ENCODE measurements at regions of chr6 and their contacts with region 1.

Region 1: DNA sequence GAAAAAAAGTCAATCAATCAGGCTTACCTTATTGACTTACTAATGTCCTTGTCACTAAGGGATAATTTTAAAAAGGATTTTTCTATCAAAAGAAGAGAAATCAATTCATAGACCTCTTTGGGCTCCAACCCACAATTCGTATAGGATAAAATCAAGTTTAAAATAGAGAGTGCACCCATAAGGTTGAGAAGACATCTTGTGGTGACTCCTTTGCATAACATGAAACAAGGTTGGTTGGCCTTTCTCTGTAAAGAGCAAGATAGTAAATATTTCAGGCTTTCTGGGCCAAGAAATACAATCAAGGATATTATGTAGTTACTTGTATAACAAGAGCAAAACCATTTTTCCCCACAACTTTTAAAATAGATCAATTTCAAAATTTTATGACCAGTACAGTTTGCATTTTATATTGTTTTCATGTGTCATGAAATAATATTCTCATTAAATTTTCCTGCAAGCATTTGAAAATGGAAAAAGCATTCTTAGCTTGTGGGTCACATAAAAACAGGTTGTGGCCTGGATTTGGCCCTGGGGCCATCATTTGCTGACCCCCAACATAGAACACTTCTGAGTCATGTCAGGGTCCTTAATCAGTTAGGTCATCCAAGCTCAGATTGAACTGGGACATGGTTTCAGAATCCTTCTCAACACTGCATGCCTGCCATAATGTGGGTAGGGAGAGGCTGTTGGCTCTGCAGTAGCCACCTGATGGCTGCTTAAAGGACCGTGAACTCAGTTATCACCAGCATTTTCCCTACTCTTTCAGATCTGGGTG is 76.7 kb downstream of the MYB start:
- DNase-seq: peak in 1 of 2 experiments; percentile 44
- H3K4me3 ChIP-seq: no peak overlapping the region
- H3K27ac ChIP-seq: no peak overlapping the region
- H3K4me1 ChIP-seq: peaks cover 19% of the 10 kb centered on the region
- H3K27me3 ChIP-seq: peaks cover 85% of the 10 kb centered on the region
- CTCF ChIP-seq: peak; percentile 47; the same call in 1 of the 2 replicates

Region 2: DNA sequence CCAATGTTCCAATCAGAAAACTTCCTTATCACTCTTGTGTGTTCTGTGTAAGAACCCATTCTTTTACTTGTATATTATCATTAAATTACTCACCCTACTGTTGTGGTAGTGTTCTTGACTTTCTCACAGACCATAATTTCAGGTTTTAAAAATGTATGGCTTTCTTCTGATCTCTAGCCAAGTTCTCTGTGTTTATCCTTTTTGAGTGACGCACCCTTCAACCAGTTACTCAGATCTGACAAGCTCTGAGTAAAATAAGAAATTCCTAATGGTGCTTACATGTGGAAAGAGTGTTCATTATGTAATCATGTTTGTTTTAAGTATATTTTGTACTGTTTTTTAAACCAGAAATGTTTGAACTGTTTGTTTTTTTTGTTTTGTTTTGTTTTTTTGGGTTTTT is 1293.8 kb before region 1 on chr6:
- CTCF ChIA-PET with region 1: no interaction called
- POLR2A ChIA-PET with region 1: no interaction called
- intact Hi-C with region 1: no loop called
- DNase-seq: no peak
- H3K4me3 ChIP-seq: no peak overlapping the region
- H3K27ac ChIP-seq: no peak overlapping the region
- H3K4me1 ChIP-seq: no peaks in the 10 kb centered on the region
- H3K27me3 ChIP-seq: no peaks in the 10 kb centered on the region
- CTCF ChIP-seq: no peak

Region 3: DNA sequence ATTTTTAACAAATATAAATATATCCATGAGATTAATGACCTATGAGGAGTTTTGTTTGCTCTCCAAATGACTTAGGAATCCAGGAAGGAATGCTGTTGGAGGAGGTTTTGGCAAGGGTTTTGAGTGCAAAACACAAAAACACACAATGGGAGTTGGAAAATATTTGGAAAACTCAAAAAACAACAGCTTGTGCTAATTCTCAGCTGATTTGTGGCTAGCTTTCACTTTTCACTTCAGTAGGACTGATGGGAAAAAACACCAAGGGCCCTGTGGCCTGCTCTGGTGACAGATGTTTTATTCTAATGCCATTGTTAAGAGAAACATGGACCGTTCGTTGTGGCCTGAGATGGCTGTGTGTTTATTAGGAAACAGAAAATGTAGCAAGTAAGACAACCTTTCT is 421.8 kb before region 1 on chr6:
- CTCF ChIA-PET with region 1: no interaction called
- POLR2A ChIA-PET with region 1: no interaction called
- intact Hi-C with region 1: no loop called
- DNase-seq: peak in 1 of 2 experiments; percentile 30
- H3K4me3 ChIP-seq: no peak overlapping the region
- H3K27ac ChIP-seq: no peak overlapping the region
- H3K4me1 ChIP-seq: no peaks in the 10 kb centered on the region
- H3K27me3 ChIP-seq: no peaks in the 10 kb centered on the region
- CTCF ChIP-seq: no peak

Region 4: GRCh38 chr6:135054569-135055498 is 203.0 kb before region 1 on chr6 and contains the start of gene HBS1L:
- CTCF ChIA-PET with region 1: no interaction called
- POLR2A ChIA-PET with region 1: interaction called, 11 read pairs
- intact Hi-C with region 1: no loop called
- DNase-seq: peak; percentile 96 to 98
- H3K4me3 ChIP-seq: peak within 1 kb of the TSS; percentile 84
- H3K27ac ChIP-seq: peak within 1 kb of the TSS; percentile 72
- H3K4me1 ChIP-seq: peaks cover 22% of the 10 kb centered on the region
- H3K27me3 ChIP-seq: no peaks in the 10 kb centered on the region
- CTCF ChIP-seq: no peak; the same call in 1 of the 2 replicates
- total RNA-seq, gene HBS1L: 70.5 and 84.4 TPM in 2 replicates

Region 5: GRCh38 chr6:135497412-135498269 is 239.8 kb after region 1 on chr6 and contains the start of gene AHI1:
- CTCF ChIA-PET with region 1: no interaction called
- POLR2A ChIA-PET with region 1: no interaction called
- intact Hi-C with region 1: no loop called
- DNase-seq: peak; percentile 89 to 93
- H3K4me3 ChIP-seq: peak within 1 kb of the TSS; percentile 87
- H3K27ac ChIP-seq: peak within 1 kb of the TSS; percentile 92
- H3K4me1 ChIP-seq: peaks cover 21% of the 10 kb centered on the region
- H3K27me3 ChIP-seq: no peaks in the 10 kb centered on the region
- CTCF ChIP-seq: peak; percentile 3; the same call in 1 of the 2 replicates
- total RNA-seq, gene AHI1: 19.8 and 19.9 TPM in 2 replicates